Naive thymus-derived CD4-positive, alpha-beta T cell (primary cell): ENCODE measurements at regions of chr2 and their contacts with region 1.

Region 1: DNA sequence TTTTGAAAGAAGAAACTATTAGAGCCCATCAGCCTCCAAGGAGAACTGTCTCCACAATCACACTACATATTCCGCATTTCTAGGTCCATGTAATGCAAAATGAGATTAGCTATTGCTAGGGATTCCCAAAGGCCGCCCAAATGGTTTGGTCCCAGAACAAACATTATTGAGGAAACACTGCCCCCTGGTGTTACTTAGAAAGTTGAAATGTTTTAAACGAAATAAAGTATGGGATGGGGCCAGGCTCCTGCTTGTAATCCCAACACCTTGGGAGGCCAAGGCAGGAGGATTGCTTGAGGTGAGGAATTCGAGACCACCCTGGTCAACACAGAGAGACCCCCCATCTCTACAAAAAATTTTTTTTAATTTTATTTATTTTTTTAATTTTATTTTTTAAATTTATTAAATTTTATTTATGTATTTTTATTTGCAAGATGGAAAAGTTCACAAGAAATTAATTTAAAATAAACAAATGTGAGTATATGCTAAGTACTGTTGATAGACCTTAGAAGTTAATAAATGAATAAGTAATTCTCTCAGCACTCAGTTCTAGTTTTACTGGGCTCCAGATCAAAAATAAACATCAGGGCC is 5.5 kb downstream of the NHEJ1 start:
- DNase-seq: peak in 7 of 9 donors; percentile 35 to 58 (median 54)
- ATAC-seq: peak; percentile 53
- H3K4me3 ChIP-seq: no peak overlapping the region
- H3K4me3 Mint-ChIP-seq: no peak overlapping the region
- H3K27ac ChIP-seq: no peak overlapping the region
- H3K27ac Mint-ChIP-seq: no peak overlapping the region
- H3K4me1 ChIP-seq: peaks cover 5 to 6% of the 10 kb centered on the region in 2 donors
- H3K4me1 Mint-ChIP-seq: peaks cover 7 to 21% (median 13%) of the 10 kb centered on the region in 7 donors
- H3K27me3 ChIP-seq: no peaks in the 10 kb centered on the region
- H3K27me3 Mint-ChIP-seq: no peaks in the 10 kb centered on the region

Region 2: GRCh38 chr2:218995972-218996711 is 159.0 kb before region 1 on chr2:
- CTCF ChIA-PET with region 1: interaction called, 3 read pairs
- POLR2A ChIA-PET with region 1: no interaction called
- intact Hi-C with region 1: loop called in 1 of 2 experiments (anchors 1 kb)
- DNase-seq: peak; percentile 38 to 85 (median 63)
- ATAC-seq: peak; percentile 90
- H3K4me3 ChIP-seq: no peak overlapping the region
- H3K4me3 Mint-ChIP-seq: peak overlapping the region in 6 of 10 donors; percentile 29 to 66 (median 45)
- H3K27ac ChIP-seq: no peak overlapping the region
- H3K27ac Mint-ChIP-seq: no peak overlapping the region
- H3K4me1 ChIP-seq: peaks cover 0 to 7% of the 10 kb centered on the region in 2 donors
- H3K4me1 Mint-ChIP-seq: peaks cover 0 to 15% (median 7%) of the 10 kb centered on the region in 7 donors
- H3K27me3 ChIP-seq: peaks cover 5 to 33% of the 10 kb centered on the region in 2 donors
- H3K27me3 Mint-ChIP-seq: peaks cover 57 to 88% (median 64%) of the 10 kb centered on the region in 5 donors

Region 3: GRCh38 chr2:219029829-219030165 is 125.4 kb before region 1 on chr2:
- CTCF ChIA-PET with region 1: interaction called, 12 read pairs
- POLR2A ChIA-PET with region 1: no interaction called
- intact Hi-C with region 1: loop called (anchors 1 kb)
- DNase-seq: peak; percentile 60 to 79 (median 71)
- ATAC-seq: peak; percentile 90
- H3K4me3 ChIP-seq: no peak overlapping the region
- H3K4me3 Mint-ChIP-seq: no peak overlapping the region
- H3K27ac ChIP-seq: no peak overlapping the region
- H3K27ac Mint-ChIP-seq: peak overlapping the region in 1 of 9 donors; percentile 14
- H3K4me1 ChIP-seq: no peaks in the 10 kb centered on the region
- H3K4me1 Mint-ChIP-seq: no peaks in the 10 kb centered on the region
- H3K27me3 ChIP-seq: peaks cover 0 to 3% of the 10 kb centered on the region in 2 donors
- H3K27me3 Mint-ChIP-seq: peaks cover 21 to 41% (median 28%) of the 10 kb centered on the region in 5 donors

Region 4: GRCh38 chr2:219142329-219142728 is 12.8 kb before region 1 on chr2:
- CTCF ChIA-PET with region 1: interaction called, 13 read pairs
- POLR2A ChIA-PET with region 1: no interaction called
- intact Hi-C with region 1: no loop called
- DNase-seq: no peak
- ATAC-seq: no peak
- H3K4me3 ChIP-seq: no peak overlapping the region
- H3K4me3 Mint-ChIP-seq: no peak overlapping the region
- H3K27ac ChIP-seq: no peak overlapping the region
- H3K27ac Mint-ChIP-seq: no peak overlapping the region
- H3K4me1 ChIP-seq: no peaks in the 10 kb centered on the region
- H3K4me1 Mint-ChIP-seq: peaks cover 0 to 10% (median 0%) of the 10 kb centered on the region in 7 donors
- H3K27me3 ChIP-seq: no peaks in the 10 kb centered on the region
- H3K27me3 Mint-ChIP-seq: no peaks in the 10 kb centered on the region

Region 5: GRCh38 chr2:220090004-220090403 is 934.9 kb after region 1 on chr2:
- CTCF ChIA-PET with region 1: no interaction called
- POLR2A ChIA-PET with region 1: no interaction called
- intact Hi-C with region 1: no loop called
- DNase-seq: no peak
- ATAC-seq: no peak
- H3K4me3 ChIP-seq: no peak overlapping the region
- H3K4me3 Mint-ChIP-seq: no peak overlapping the region
- H3K27ac ChIP-seq: no peak overlapping the region
- H3K27ac Mint-ChIP-seq: no peak overlapping the region
- H3K4me1 ChIP-seq: no peaks in the 10 kb centered on the region
- H3K4me1 Mint-ChIP-seq: no peaks in the 10 kb centered on the region
- H3K27me3 ChIP-seq: no peaks in the 10 kb centered on the region
- H3K27me3 Mint-ChIP-seq: peaks cover 0 to 6% (median 3%) of the 10 kb centered on the region in 5 donors